ENCODE measurements at regions of chr12 and their contacts with region 1.

Region 1: GRCh38 chr12:83823431-83823963 is 1089.1 kb downstream of the SLC6A15 start:
- DNase-seq: peak; percentile 67
- H3K4me3 ChIP-seq: no peak overlapping the region
- H3K27ac ChIP-seq: no peak overlapping the region
- H3K4me1 ChIP-seq: no peaks in the 10 kb centered on the region
- H3K27me3 ChIP-seq: no peaks in the 10 kb centered on the region
- CTCF ChIP-seq: peak; percentile 67

Region 2: GRCh38 chr12:82527165-82527780 is 1296.2 kb before region 1 on chr12:
- CTCF ChIA-PET with region 1: no interaction called
- POLR2A ChIA-PET with region 1: no interaction called
- intact Hi-C with region 1: loop called (anchors 5 kb)
- DNase-seq: peak; percentile 61
- H3K4me3 ChIP-seq: no peak overlapping the region
- H3K27ac ChIP-seq: no peak overlapping the region
- H3K4me1 ChIP-seq: no peaks in the 10 kb centered on the region
- H3K27me3 ChIP-seq: peaks cover 8% of the 10 kb centered on the region
- CTCF ChIP-seq: peak; percentile 90

Region 3: GRCh38 chr12:83451189-83451588 is 372.3 kb before region 1 on chr12:
- CTCF ChIA-PET with region 1: no interaction called
- POLR2A ChIA-PET with region 1: no interaction called
- intact Hi-C with region 1: loop called (anchors 10 kb)
- DNase-seq: no peak
- H3K4me3 ChIP-seq: no peak overlapping the region
- H3K27ac ChIP-seq: no peak overlapping the region
- H3K4me1 ChIP-seq: no peaks in the 10 kb centered on the region
- H3K27me3 ChIP-seq: no peaks in the 10 kb centered on the region
- CTCF ChIP-seq: no peak

Region 4: GRCh38 chr12:83656004-83656403 is 167.5 kb before region 1 on chr12:
- CTCF ChIA-PET with region 1: no interaction called
- POLR2A ChIA-PET with region 1: no interaction called
- intact Hi-C with region 1: no loop called
- DNase-seq: no peak
- H3K4me3 ChIP-seq: no peak overlapping the region
- H3K27ac ChIP-seq: no peak overlapping the region
- H3K4me1 ChIP-seq: no peaks in the 10 kb centered on the region
- H3K27me3 ChIP-seq: no peaks in the 10 kb centered on the region
- CTCF ChIP-seq: no peak

Region 5: DNA sequence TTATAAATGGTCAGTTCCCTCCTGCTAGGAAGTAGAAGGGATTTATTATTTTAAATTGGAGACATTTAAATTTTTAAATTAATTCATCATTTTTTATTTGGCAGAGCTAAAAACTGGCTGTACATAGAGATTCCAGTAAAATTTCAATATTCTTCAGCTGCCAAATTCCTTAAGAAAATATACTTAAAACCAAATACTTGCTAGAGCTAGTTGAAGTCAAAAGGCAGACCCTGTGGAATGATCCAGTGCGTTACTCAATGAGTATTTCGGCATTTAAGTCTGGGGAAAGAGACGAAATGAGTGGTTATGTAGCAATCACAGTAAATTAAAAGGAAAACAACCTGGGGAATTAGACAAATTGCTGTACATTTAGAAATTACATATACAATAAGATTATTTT is 15.6 kb before region 1 on chr12:
- CTCF ChIA-PET with region 1: no interaction called
- POLR2A ChIA-PET with region 1: no interaction called
- intact Hi-C with region 1: no loop called
- DNase-seq: no peak
- H3K4me3 ChIP-seq: no peak overlapping the region
- H3K27ac ChIP-seq: no peak overlapping the region
- H3K4me1 ChIP-seq: no peaks in the 10 kb centered on the region
- H3K27me3 ChIP-seq: no peaks in the 10 kb centered on the region
- CTCF ChIP-seq: no peak

Region 6: DNA sequence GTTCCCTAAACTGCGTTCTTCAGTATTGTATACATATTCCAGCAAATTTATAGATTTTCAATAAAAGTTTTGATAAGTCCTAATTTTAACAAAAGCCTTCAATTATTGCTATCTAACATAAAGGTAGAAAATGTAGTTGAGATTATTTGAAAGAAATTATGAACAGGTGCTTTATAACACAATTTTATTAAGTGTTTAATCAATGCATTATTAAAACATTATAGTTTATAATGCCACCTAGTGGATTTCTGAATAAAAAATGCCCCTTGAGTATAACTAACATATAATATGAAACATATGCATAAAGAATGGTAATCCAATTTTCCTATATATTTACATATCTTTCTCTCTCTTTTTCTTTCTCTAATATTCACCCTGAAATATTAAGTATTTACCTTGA is 573.8 kb after region 1 on chr12:
- CTCF ChIA-PET with region 1: no interaction called
- POLR2A ChIA-PET with region 1: no interaction called
- intact Hi-C with region 1: loop called (anchors 5 kb)
- DNase-seq: peak; percentile 11
- H3K4me3 ChIP-seq: no peak overlapping the region
- H3K27ac ChIP-seq: no peak overlapping the region
- H3K4me1 ChIP-seq: no peaks in the 10 kb centered on the region
- H3K27me3 ChIP-seq: no peaks in the 10 kb centered on the region
- CTCF ChIP-seq: peak; percentile 51; the same call in 1 of the 2 replicates

Region 7: GRCh38 chr12:84842406-84843013 is 1019.0 kb after region 1 on chr12:
- CTCF ChIA-PET with region 1: no interaction called
- POLR2A ChIA-PET with region 1: no interaction called
- intact Hi-C with region 1: loop called (anchors 5 kb)
- DNase-seq: peak; percentile 64
- H3K4me3 ChIP-seq: no peak overlapping the region
- H3K27ac ChIP-seq: no peak overlapping the region
- H3K4me1 ChIP-seq: no peaks in the 10 kb centered on the region
- H3K27me3 ChIP-seq: no peaks in the 10 kb centered on the region
- CTCF ChIP-seq: peak; percentile 81